Activated B cell treated with CpG ODN at 0.5 μM for 24 hours (primary cell): ENCODE measurements at regions of chr6 and their contacts with region 1.

Region 1: DNA sequence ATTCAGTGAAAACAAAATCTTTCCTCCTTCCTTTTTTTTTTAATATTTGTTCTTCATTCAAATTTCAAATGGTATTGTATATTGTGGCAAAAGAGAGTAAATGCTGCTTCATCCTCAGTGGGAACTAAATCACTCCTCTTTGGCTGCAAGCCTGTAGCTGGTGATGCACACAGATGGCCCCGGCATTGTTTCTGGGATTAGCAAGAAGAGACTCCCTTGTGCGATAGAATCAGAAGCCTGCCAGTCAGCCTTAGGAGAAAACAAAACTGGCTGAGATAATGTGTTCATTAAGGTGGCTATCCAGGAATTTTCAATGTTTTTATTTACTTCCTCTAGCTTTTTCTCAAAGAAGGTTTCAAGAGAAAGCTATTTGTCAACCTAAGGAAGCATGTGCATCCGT is 20.7 kb upstream of the ELOVL2 start:
- DNase-seq: no peak
- ATAC-seq: no peak
- H3K4me3 Mint-ChIP-seq: no peak overlapping the region
- H3K27ac Mint-ChIP-seq: no peak overlapping the region
- H3K4me1 Mint-ChIP-seq: no peaks in the 10 kb centered on the region
- H3K27me3 Mint-ChIP-seq: no peaks in the 10 kb centered on the region
- CTCF ChIP-seq: no peak

Region 2: GRCh38 chr6:9540534-9541126 is 1524.2 kb before region 1 on chr6:
- CTCF ChIA-PET with region 1: no interaction called
- POLR2A ChIA-PET with region 1: no interaction called
- intact Hi-C with region 1: loop called (anchors 5 kb)
- DNase-seq: no peak
- ATAC-seq: no peak
- H3K4me3 Mint-ChIP-seq: no peak overlapping the region
- H3K27ac Mint-ChIP-seq: no peak overlapping the region
- H3K4me1 Mint-ChIP-seq: no peaks in the 10 kb centered on the region
- H3K27me3 Mint-ChIP-seq: no peaks in the 10 kb centered on the region
- CTCF ChIP-seq: peak; percentile 31

Region 3: DNA sequence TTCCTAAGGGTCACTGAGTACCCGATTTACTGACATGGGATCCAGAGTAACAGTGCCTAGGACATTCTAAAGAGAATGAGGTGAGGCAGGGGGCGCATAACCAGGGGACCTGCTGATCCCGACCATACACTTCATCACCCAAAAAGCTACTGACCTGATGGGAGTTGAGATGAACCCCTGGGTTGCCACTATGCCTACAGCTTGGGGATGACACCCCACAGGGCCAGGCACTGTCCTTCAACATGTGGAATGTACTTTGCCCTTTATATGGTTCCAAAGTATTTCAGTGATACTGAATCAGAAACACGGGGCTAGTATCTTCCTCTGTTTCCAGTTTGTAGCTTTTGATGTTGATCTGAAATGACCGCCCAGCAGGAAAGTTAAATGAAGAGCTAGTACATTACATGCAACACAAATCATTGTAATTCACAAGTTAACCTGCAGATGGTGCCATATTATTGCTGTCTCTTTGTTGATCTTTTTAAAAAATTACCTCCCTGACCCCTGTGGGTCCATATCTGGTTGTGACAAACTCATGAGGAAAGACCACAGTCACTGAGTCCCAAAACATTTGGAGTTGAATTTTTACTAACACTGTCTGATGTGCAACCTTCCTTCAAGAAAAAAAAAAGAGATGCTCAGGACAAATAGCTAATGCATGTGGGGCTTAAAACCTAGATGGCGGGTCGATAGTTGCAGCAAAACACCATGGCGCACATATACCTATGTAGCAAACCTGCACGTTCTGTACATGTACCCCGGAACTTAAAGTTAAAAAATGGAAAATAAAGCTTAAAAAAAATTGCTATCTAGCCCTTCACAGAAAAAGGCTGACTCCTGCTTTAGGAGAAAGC is 586.4 kb before region 1 on chr6:
- CTCF ChIA-PET with region 1: interaction called, 61 read pairs
- POLR2A ChIA-PET with region 1: no interaction called
- intact Hi-C with region 1: loop called (anchors 1 kb)
- DNase-seq: no peak
- ATAC-seq: peak; percentile 42
- H3K4me3 Mint-ChIP-seq: no peak overlapping the region
- H3K27ac Mint-ChIP-seq: no peak overlapping the region
- H3K4me1 Mint-ChIP-seq: no peaks in the 10 kb centered on the region
- H3K27me3 Mint-ChIP-seq: peaks cover 11% of the 10 kb centered on the region
- CTCF ChIP-seq: no peak

Region 4: DNA sequence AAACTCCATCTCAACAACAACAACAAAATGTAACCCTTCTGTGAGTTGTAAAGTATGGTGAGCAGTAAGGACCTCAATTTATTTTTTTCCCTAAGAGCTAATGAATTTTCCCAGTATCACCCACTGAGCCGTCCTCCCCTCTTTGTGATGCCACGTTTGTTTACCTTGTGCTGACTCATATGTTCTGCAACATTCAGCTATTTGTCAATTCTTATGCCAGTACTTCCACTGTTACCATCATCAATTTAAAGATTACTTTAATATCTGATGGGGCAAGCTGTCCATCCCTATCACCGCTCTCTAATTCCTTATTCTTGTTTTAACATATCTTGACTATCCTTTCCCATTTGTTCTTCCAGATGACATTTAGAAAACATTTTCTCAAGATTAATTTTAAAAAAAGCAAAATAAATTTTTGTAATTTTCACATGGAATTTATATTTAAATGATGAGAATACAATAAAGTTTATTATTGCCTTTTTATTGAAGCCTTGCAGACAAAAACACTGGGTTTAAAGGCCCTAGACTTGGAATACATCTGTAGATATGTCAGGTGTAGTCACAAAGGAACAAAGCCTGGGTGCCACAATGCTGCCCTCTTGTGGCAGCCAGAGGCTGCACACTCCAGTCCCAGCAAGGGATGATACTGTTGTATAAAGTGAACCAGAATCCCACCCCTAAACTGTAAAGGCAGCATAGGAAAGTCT is 263.9 kb before region 1 on chr6:
- CTCF ChIA-PET with region 1: interaction called, 5 read pairs
- POLR2A ChIA-PET with region 1: no interaction called
- intact Hi-C with region 1: loop called (anchors 1 kb)
- DNase-seq: peak; percentile 37
- ATAC-seq: peak; percentile 75
- H3K4me3 Mint-ChIP-seq: no peak overlapping the region
- H3K27ac Mint-ChIP-seq: no peak overlapping the region
- H3K4me1 Mint-ChIP-seq: no peaks in the 10 kb centered on the region
- H3K27me3 Mint-ChIP-seq: no peaks in the 10 kb centered on the region
- CTCF ChIP-seq: peak; percentile 98

Region 5: GRCh38 chr6:10847684-10848083 is 217.2 kb before region 1 on chr6:
- CTCF ChIA-PET with region 1: interaction called, 10 read pairs
- POLR2A ChIA-PET with region 1: no interaction called
- intact Hi-C with region 1: no loop called
- DNase-seq: no peak
- ATAC-seq: no peak
- H3K4me3 Mint-ChIP-seq: no peak overlapping the region
- H3K27ac Mint-ChIP-seq: no peak overlapping the region
- H3K4me1 Mint-ChIP-seq: no peaks in the 10 kb centered on the region
- H3K27me3 Mint-ChIP-seq: peaks cover 6% of the 10 kb centered on the region
- CTCF ChIP-seq: no peak

Region 6: DNA sequence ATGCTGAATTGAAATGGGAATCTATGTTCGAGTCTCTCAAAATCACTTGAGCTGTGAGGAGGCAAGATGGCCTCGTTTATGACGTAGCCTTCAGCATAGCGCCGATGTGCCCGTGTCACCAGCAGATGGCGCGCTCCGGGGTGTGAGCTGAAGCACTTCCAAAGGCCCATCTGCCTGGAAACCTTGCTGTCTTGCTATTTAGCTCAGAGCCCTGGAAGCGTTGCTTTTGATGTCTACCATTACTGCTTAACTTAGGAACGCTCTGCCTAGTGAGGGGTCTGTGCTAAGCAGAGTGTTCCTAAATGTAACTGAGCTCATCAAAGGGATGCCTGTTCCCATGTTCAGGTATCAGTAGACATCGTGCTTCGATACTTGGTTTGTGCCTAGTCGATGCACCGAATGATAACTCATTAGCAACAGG is 110.2 kb before region 1 on chr6:
- CTCF ChIA-PET with region 1: interaction called, 24 read pairs
- POLR2A ChIA-PET with region 1: interaction called, 3 read pairs
- intact Hi-C with region 1: loop called (anchors 1 kb)
- DNase-seq: peak; percentile 59
- ATAC-seq: peak; percentile 50
- H3K4me3 Mint-ChIP-seq: no peak overlapping the region
- H3K27ac Mint-ChIP-seq: no peak overlapping the region
- H3K4me1 Mint-ChIP-seq: peaks cover 3% of the 10 kb centered on the region
- H3K27me3 Mint-ChIP-seq: peaks cover 16% of the 10 kb centered on the region
- CTCF ChIP-seq: no peak

Region 7: GRCh38 chr6:10976571-10976970 is 88.3 kb before region 1 on chr6:
- CTCF ChIA-PET with region 1: no interaction called
- POLR2A ChIA-PET with region 1: no interaction called
- intact Hi-C with region 1: no loop called
- DNase-seq: no peak
- ATAC-seq: no peak
- H3K4me3 Mint-ChIP-seq: no peak overlapping the region
- H3K27ac Mint-ChIP-seq: no peak overlapping the region
- H3K4me1 Mint-ChIP-seq: no peaks in the 10 kb centered on the region
- H3K27me3 Mint-ChIP-seq: peaks cover 8% of the 10 kb centered on the region
- CTCF ChIP-seq: no peak

Region 8: DNA sequence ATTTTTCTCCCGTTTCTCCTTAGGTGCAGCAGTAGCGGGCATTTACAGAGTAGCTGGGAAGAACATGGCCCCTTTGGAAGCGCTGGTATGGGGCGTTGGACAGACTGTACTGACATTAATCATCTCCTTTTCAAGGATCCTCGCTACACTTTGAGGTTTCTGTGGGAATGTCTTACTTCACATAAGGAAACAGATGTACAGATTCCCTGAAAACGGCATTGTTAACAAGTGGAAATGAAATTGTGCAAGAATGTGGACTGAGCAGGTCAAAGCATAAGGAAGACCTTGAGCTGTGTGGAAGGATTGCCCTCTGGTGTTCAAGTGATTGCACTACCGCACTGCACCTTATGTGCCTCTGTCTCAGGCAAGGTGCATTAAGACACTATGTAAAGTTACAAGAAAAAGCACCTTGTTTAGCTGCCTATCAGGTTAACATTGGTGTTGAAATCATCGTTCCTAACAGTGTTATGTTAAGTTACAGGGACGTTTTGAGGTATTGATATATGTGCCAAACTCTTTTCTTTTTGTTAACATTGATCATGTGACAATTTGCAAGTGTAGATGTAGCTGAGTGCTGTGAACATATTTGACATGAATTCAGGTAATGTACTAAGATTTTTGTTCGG is 510.7 kb after region 1 on chr6:
- CTCF ChIA-PET with region 1: interaction called, 3 read pairs
- POLR2A ChIA-PET with region 1: no interaction called
- intact Hi-C with region 1: loop called (anchors 2 kb)
- DNase-seq: no peak
- ATAC-seq: peak; percentile 100
- H3K4me3 Mint-ChIP-seq: no peak overlapping the region
- H3K27ac Mint-ChIP-seq: no peak overlapping the region
- H3K4me1 Mint-ChIP-seq: peaks cover 2% of the 10 kb centered on the region
- H3K27me3 Mint-ChIP-seq: no peaks in the 10 kb centered on the region
- CTCF ChIP-seq: peak; percentile 73